CD8-positive, alpha-beta T cell (primary cell): ENCODE measurements at regions of chr9 and their contacts with region 1.

Region 1: DNA sequence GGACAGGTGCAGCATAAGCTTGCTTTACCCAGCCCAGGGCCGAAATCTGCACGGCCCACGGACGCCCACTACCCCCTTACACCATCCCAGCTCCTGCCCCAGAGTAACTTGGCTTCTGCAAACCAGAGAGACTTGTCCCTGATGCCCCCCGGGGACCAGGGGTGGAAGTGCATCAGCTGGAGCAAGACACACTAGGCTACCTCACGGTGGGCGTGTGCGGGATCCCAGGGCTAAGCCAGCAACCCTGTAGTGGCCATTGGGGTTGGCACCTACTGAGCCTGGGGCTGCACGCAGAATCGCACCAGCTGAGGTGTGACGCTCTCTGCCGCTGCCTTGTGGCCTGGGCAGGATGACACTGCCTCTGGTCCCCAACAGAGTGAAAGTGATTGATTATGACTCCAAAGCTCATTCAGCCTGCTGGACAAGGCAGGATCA is 6.1 kb upstream of the ZNF79 start:
- DNase-seq: peak in 8 of 9 experiments; percentile 19 to 71 (median 51)
- ATAC-seq: peak; percentile 87
- H3K4me3 ChIP-seq: no peak overlapping the region
- H3K4me3 Mint-ChIP-seq: no peak overlapping the region
- H3K27ac ChIP-seq: no peak overlapping the region
- H3K27ac Mint-ChIP-seq: no peak overlapping the region
- H3K4me1 ChIP-seq: peaks cover 6% of the 10 kb centered on the region
- H3K4me1 Mint-ChIP-seq: peaks cover 4% of the 10 kb centered on the region
- H3K27me3 ChIP-seq: peaks cover 2% of the 10 kb centered on the region in 2 experiments
- H3K27me3 Mint-ChIP-seq: peaks cover 26% of the 10 kb centered on the region
- CTCF ChIP-seq: peak; percentile 24

Region 2: GRCh38 chr9:127112056-127112455 is 306.0 kb before region 1 on chr9:
- CTCF ChIA-PET with region 1: no interaction called
- POLR2A ChIA-PET with region 1: no interaction called
- intact Hi-C with region 1: no loop called
- DNase-seq: no peak
- ATAC-seq: no peak
- H3K4me3 ChIP-seq: no peak overlapping the region
- H3K4me3 Mint-ChIP-seq: no peak overlapping the region
- H3K27ac ChIP-seq: no peak overlapping the region
- H3K27ac Mint-ChIP-seq: no peak overlapping the region
- H3K4me1 ChIP-seq: peaks cover 15% of the 10 kb centered on the region
- H3K4me1 Mint-ChIP-seq: peaks cover 19% of the 10 kb centered on the region
- H3K27me3 ChIP-seq: no peaks in the 10 kb centered on the region
- H3K27me3 Mint-ChIP-seq: peaks cover 2% of the 10 kb centered on the region
- CTCF ChIP-seq: no peak

Region 3: GRCh38 chr9:127214421-127215267 is 203.4 kb before region 1 on chr9:
- CTCF ChIA-PET with region 1: interaction called, 4 read pairs
- POLR2A ChIA-PET with region 1: no interaction called
- intact Hi-C with region 1: loop called (anchors 1 to 5 kb)
- DNase-seq: peak; percentile 36 to 73 (median 64)
- ATAC-seq: peak; percentile 93
- H3K4me3 ChIP-seq: no peak overlapping the region
- H3K4me3 Mint-ChIP-seq: no peak overlapping the region
- H3K27ac ChIP-seq: no peak overlapping the region
- H3K27ac Mint-ChIP-seq: no peak overlapping the region
- H3K4me1 ChIP-seq: no peaks in the 10 kb centered on the region
- H3K4me1 Mint-ChIP-seq: peaks cover 3% of the 10 kb centered on the region
- H3K27me3 ChIP-seq: no peaks in the 10 kb centered on the region
- H3K27me3 Mint-ChIP-seq: peaks cover 8% of the 10 kb centered on the region
- CTCF ChIP-seq: peak; percentile 69

Region 4: GRCh38 chr9:127311239-127311741 is 106.8 kb before region 1 on chr9:
- CTCF ChIA-PET with region 1: interaction called, 9 read pairs
- POLR2A ChIA-PET with region 1: no interaction called
- intact Hi-C with region 1: loop called (anchors 5 to 10 kb)
- DNase-seq: peak in 7 of 9 experiments; percentile 6 to 57 (median 40)
- ATAC-seq: no peak
- H3K4me3 ChIP-seq: no peak overlapping the region
- H3K4me3 Mint-ChIP-seq: no peak overlapping the region
- H3K27ac ChIP-seq: no peak overlapping the region
- H3K27ac Mint-ChIP-seq: no peak overlapping the region
- H3K4me1 ChIP-seq: no peaks in the 10 kb centered on the region
- H3K4me1 Mint-ChIP-seq: no peaks in the 10 kb centered on the region
- H3K27me3 ChIP-seq: no peaks in the 10 kb centered on the region
- H3K27me3 Mint-ChIP-seq: peaks cover 25% of the 10 kb centered on the region
- CTCF ChIP-seq: no peak